ENCODE measurements at regions of chr6 and their contacts with region 1.

Region 1: GRCh38 chr6:110682460-110682853 is 132.8 kb downstream of the CDK19 start:
- DNase-seq: peak; percentile 86
- H3K4me3 ChIP-seq: no peak overlapping the region
- H3K27ac ChIP-seq: peak overlapping the region; percentile 76 to 83
- H3K4me1 ChIP-seq: no peaks in the 10 kb centered on the region
- H3K27me3 ChIP-seq: no peaks in the 10 kb centered on the region
- CTCF ChIP-seq: peak; percentile 55 to 86 (median 82)
- POLR2A ChIP-seq: no peak

Region 2: DNA sequence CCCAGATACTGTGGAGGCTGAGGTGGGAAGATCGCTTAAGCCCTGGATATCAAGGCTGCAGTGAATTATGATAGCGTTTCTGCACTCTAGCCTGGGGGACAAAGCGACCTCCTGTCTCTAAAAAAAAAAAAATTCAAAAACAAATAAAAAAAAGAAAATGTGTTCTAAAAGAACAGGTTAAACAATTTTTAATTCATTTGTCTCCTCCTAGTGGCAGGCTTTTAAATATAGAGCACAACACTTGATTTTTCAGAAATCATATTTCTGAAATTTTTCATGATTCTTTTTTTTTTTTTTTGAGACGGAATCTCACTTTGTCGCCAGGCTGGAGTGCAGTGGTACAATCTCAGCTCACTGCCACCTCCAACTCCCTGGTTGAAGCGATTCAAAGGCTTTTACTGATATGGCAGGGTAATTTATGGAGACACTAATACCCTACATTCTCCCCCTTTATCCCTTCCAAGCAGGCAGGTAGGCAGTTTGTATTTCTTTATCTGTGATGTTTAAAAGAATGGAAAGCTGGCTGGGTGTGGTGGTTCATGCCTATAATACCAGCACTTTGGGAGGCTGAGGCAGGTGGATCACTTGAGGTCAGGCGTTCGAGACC is 267.3 kb after region 1 on chr6:
- intact Hi-C with region 1: loop called (anchors 2 kb)
- DNase-seq: no peak
- H3K4me3 ChIP-seq: no peak overlapping the region
- H3K27ac ChIP-seq: peak overlapping the region; percentile 40 to 91
- H3K4me1 ChIP-seq: no peaks in the 10 kb centered on the region
- H3K27me3 ChIP-seq: no peaks in the 10 kb centered on the region
- CTCF ChIP-seq: peak; percentile 23 to 59 (median 52)
- POLR2A ChIP-seq: no peak

Region 3: DNA sequence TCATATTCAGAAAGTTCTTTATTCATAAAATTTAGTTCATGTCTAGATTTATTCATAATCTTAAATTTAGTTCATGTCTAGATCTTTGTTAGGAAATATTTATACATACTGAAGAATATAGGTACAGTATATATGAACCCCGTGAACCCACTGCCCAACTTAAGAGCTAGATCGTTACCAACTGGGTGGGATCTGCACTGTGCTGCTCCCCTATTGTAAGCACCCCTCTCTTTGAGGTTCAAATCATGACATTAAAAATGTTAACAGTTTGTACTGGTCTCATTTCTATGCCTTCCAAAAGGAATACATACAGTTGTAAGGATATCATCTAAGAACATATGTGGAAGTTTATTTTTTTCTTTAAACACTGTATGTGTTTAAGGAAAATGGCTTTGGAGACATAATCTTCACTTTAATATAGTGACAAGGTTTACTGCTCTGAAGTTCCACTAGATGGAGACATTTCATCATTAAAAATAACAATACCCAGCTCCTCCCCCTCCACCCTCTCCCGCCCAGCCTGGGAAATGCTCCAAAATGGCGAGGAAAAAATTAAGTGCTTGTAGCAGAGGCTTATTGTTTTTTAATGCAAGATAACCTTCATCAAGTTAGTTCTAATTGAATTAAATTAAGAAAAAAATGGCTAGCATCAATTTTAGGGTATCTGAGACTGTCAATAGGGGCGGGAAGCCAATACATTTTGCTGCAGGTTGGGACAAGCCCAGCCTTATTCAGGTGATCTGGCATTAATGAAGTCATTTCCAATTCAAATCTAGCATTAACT is 1027.3 kb after region 1 on chr6:
- intact Hi-C with region 1: no loop called
- DNase-seq: peak; percentile 60
- H3K4me3 ChIP-seq: no peak overlapping the region
- H3K27ac ChIP-seq: no peak overlapping the region
- H3K4me1 ChIP-seq: no peaks in the 10 kb centered on the region
- H3K27me3 ChIP-seq: no peaks in the 10 kb centered on the region
- CTCF ChIP-seq: peak; percentile 26 to 92 (median 87)
- POLR2A ChIP-seq: no peak